Activated T-helper 1 cell treated with anti-CD3 and anti-CD28 coated beads, Interleukin-12 subunit alpha, Interleukin-12 subunit beta, Interleukin-2, Interleukin-4 antibody, amounts not matched to agents 30 ng/mL and 10 ng/mL and 1 ng/mL, durations not matched to agents 14 hours and 24 hours and 36 hours (primary cell): ENCODE measurements at regions of chr1 and their contacts with region 1.

Region 1: DNA sequence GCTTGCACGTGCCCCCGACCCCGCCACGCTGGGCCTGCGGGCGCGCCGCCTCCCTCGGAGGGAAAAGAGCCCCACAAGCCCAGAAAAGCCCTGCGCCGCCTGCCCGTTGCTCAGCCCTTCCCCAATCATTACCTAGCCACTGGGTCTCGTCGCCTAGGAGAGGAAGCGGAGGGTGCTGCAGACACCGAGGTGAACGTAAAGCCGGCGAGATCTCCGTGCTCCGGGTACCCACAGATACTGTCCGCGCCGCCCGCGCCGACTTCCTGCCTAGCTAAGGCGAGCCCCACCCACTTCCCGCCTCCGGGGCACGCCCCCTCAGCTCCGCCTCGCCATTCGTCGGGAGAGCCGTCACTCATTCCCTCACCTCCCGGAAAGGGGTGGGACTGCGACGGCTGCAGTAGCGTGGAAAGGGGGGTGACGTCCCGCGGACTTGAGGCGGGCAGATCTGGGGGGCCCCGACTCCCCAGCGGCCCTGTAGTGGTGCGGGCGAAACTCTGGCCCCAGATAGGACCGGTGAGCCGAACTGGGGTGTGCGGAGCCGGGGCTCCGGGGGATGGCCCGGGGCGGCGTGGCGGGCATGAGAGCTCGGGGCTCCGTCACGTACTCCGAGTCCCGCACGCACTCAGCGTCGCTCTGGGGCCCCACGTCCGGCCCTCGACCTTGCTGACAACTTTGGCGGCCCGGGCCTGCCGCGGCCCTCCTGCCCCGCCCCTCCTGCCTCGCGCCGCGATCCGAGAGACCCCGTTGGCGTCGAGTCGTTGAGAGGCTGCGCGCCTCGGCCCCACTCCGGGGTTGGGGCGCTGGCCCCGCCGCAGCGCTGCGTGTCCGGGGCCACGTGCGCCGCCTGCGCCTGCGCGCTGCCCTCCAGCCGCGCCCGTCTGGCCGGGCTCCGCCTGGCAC is at the start of gene ENO1:
- DNase-seq: peak; percentile 99
- H3K4me3 Mint-ChIP-seq: peak within 1 kb of the TSS; percentile 99
- H3K27ac Mint-ChIP-seq: peak within 1 kb of the TSS; percentile 100
- H3K4me1 Mint-ChIP-seq: peaks cover 43% of the 10 kb centered on the region
- H3K27me3 Mint-ChIP-seq: peaks cover 2% of the 10 kb centered on the region
- total RNA-seq, gene ENO1: 3,370 and 3,388 TPM in 2 replicates

Region 2: DNA sequence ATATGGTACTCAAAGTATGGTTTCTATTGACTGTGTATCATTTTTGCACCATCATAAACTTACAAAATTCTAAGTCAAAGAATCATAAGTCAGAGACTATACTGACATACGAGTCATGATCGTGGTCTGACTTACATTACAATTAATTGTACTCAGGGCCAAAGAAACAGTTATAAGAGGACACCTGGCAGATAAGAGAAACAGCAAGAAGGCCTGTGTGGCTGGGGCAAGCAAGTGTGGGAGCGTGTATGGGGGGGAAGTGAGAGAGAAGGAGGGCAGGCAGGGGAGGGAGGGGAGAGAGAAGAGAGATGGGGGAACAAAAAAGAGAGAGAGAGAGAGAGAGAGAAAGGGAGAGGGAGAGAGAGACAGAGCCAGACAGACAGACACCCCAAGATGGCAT is 132.1 kb before region 1 on chr1:
- intact Hi-C with region 1: no loop called
- DNase-seq: no peak
- H3K4me3 Mint-ChIP-seq: no peak overlapping the region
- H3K27ac Mint-ChIP-seq: no peak overlapping the region
- H3K4me1 Mint-ChIP-seq: peaks cover 4% of the 10 kb centered on the region
- H3K27me3 Mint-ChIP-seq: no peaks in the 10 kb centered on the region

Region 3: DNA sequence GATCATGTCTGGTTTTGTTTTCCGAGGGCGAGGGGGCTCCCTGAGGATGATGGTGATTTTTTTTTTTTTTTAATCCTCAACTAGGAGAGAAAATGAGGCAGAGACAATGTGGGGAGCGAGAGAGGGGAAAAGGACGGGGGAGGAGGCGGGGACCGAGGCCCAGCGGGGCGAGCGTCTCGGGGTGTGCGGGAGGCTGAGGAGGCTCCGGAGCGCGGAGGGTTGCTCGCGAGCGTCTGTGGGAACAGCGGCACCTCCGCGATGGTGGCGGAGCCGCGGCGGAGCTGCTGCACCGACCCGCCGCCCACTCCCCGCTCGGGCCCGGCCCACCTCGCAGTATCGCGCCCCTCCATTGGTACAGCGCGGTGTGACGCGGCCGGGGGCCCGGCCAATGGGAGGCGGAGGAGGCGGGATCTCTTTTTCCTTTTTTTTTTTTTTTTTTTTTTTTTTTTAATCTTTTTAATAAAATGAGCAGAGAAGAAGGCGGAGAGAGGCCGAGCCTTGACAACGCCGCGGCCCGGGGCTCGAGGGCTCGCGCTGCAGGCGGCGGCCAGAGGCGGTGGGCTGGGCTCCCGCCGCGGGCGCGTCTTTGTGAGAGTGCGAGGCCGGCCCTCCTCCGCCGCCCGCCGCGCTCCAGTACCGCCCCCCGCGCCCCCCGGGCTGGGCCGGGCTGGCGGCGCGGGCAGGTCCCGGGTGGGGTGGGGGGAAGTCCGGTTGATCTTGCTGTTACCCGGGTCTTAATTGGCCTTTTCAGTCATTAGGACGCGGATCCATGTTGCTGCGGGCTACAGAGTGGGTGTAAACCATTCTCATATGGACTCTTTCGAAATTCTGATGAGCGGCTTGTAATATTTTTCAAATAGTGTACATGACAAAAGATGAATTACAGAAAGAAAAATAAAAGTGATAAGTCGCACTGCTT is 61.0 kb before region 1 on chr1 and contains the start of gene RERE:
- intact Hi-C with region 1: loop called (anchors 5 kb)
- DNase-seq: peak; percentile 96
- H3K4me3 Mint-ChIP-seq: peak within 1 kb of the TSS; percentile 86
- H3K27ac Mint-ChIP-seq: peak within 1 kb of the TSS; percentile 93
- H3K4me1 Mint-ChIP-seq: peaks cover 44% of the 10 kb centered on the region
- H3K27me3 Mint-ChIP-seq: peaks cover 12% of the 10 kb centered on the region
- total RNA-seq, gene RERE: 82.0 and 90.9 TPM in 2 replicates

Region 4: GRCh38 chr1:8947127-8947691 is 68.5 kb after region 1 on chr1:
- intact Hi-C with region 1: loop called (anchors 2 kb)
- DNase-seq: no peak
- H3K4me3 Mint-ChIP-seq: peak overlapping the region; percentile 68
- H3K27ac Mint-ChIP-seq: peak overlapping the region; percentile 98
- H3K4me1 Mint-ChIP-seq: peaks cover 73% of the 10 kb centered on the region
- H3K27me3 Mint-ChIP-seq: no peaks in the 10 kb centered on the region

Region 5: DNA sequence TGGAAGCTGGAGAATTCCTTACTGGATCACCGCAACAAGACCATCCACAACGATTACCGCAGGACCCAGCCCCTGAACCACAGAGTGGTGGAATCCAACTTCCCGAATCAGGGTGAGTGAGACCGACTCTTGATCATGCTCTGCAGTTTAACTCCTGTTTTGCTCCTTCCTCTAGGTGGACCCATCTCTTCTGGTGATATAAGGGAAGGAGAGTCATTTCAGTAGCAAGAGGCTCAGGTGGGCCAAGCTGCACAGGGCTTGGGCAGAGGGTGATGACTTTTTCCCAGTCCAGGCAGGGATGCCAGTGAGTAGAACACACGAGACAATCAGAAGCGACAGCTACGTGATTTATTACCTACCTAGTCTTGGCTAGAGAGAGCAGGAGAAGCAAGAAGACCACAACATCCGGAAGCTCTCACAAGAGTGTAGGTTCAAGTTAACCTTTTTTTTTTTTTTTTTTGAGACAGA is 92.2 kb after region 1 on chr1:
- intact Hi-C with region 1: loop called (anchors 2 kb)
- DNase-seq: peak; percentile 53
- H3K4me3 Mint-ChIP-seq: peak overlapping the region; percentile 97
- H3K27ac Mint-ChIP-seq: peak overlapping the region; percentile 98
- H3K4me1 Mint-ChIP-seq: peaks cover 57% of the 10 kb centered on the region
- H3K27me3 Mint-ChIP-seq: no peaks in the 10 kb centered on the region

Region 6: DNA sequence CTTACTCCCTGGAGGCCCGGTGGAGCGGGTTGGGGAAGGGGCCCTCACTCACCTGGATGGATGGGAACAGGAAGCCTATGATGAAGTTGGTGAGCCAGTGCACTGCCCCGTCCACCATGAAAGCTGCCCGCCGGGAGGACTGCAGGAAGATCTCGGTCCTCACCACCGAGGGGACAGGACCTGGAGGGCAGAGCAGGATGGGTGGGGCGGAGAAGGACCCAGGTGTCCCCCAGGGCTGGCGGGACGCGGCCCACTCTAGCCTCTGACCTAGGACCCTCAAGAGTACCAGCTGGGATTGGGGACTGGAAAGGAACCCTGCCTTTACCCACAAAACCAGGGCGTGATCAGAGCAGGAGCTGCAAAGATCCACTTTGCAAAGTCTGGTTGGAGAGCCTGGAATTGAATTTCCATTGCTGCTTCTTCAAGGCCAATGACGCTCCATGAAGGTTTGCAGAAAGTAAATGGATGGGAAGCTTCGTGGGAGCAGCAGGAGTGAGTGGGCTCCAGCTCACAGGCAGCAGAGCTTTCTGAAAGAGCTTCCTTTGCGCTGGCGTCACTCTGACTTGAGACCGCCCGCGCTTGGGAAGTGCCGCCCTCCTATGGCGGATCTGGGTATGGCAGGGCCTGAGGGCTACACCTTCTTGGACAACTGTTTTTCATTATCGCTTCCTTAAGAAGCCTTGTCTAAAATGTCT is 126.1 kb after region 1 on chr1:
- intact Hi-C with region 1: loop called (anchors 1 kb)
- DNase-seq: peak; percentile 78
- H3K4me3 Mint-ChIP-seq: no peak overlapping the region
- H3K27ac Mint-ChIP-seq: no peak overlapping the region
- H3K4me1 Mint-ChIP-seq: peaks cover 6% of the 10 kb centered on the region
- H3K27me3 Mint-ChIP-seq: peaks cover 5% of the 10 kb centered on the region